Calu3 (cell line): ENCODE measurements at regions of chr3 and their contacts with region 1.

Region 1: DNA sequence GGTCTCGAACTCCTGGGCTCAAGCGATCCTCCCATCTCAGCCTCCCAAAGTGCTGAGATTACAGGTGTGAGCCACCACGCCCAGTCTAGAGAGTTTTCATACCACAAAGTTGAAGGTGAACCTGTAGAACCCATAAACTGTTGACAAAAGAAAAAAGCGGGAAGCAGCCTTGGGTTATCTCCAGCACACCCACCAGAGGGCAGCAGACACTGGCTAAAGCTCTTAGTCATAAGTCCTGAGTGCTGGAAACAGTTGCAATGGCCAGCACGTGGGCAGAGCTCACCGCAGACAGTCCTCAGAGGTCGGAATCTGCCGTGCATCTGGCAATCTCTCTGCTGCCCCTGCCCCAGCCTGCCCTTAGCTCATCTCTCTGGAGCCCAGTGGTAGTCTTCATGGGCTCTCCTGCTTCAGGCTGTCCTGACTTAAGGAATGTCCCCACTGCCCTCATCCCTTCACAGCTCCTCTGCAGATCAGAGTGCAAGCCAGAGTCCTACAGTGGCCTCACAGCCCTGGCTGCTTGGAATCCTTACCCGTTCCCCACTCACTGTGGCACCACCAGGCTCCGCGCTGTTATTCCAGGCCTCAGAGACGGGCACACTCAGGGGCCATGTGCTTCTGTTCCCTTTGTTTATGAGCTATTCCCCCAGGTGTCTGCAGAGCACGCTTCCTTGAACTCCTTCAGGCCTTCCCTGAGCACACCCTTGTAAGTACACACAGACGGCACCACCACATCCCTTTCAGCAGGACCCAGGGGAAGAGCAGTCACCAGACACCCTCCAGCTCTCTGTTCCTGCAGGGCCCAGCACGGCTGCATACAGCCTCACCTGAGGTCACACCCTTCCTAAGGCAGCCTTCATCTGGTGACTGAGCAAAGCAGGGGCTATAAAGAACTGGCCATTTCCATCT is 8.8 kb upstream of the ELP6 start:
- DNase-seq: peak; percentile 82
- H3K4me3 Mint-ChIP-seq: no peak overlapping the region
- H3K27ac Mint-ChIP-seq: no peak overlapping the region
- H3K4me1 Mint-ChIP-seq: peaks cover 14% of the 10 kb centered on the region
- H3K27me3 Mint-ChIP-seq: no peaks in the 10 kb centered on the region
- CTCF ChIP-seq: peak; percentile 74

Region 2: GRCh38 chr3:47440131-47440530 is 82.2 kb before region 1 on chr3:
- CTCF ChIA-PET with region 1: no interaction called
- intact Hi-C with region 1: no loop called
- DNase-seq: no peak
- H3K4me3 Mint-ChIP-seq: no peak overlapping the region
- H3K27ac Mint-ChIP-seq: no peak overlapping the region
- H3K4me1 Mint-ChIP-seq: peaks cover 17% of the 10 kb centered on the region
- H3K27me3 Mint-ChIP-seq: no peaks in the 10 kb centered on the region
- CTCF ChIP-seq: no peak

Region 3: GRCh38 chr3:47612178-47612577 is 89.8 kb after region 1 on chr3:
- CTCF ChIA-PET with region 1: interaction called, 4 read pairs
- intact Hi-C with region 1: loop called (anchors 1 kb)
- DNase-seq: no peak
- H3K4me3 Mint-ChIP-seq: no peak overlapping the region
- H3K27ac Mint-ChIP-seq: peak overlapping the region; percentile 57
- H3K4me1 Mint-ChIP-seq: peaks cover 12% of the 10 kb centered on the region
- H3K27me3 Mint-ChIP-seq: no peaks in the 10 kb centered on the region
- CTCF ChIP-seq: no peak

Region 4: GRCh38 chr3:47791193-47791855 is 269.0 kb after region 1 on chr3:
- CTCF ChIA-PET with region 1: interaction called, 16 read pairs
- intact Hi-C with region 1: loop called (anchors 1 kb)
- DNase-seq: no peak
- H3K4me3 Mint-ChIP-seq: no peak overlapping the region
- H3K27ac Mint-ChIP-seq: no peak overlapping the region
- H3K4me1 Mint-ChIP-seq: no peaks in the 10 kb centered on the region
- H3K27me3 Mint-ChIP-seq: no peaks in the 10 kb centered on the region
- CTCF ChIP-seq: no peak